ENCODE measurements at regions of chr16 and their contacts with region 1.

Region 1: GRCh38 chr16:8868416-8869211 is at the start of gene CARHSP1:
- DNase-seq: peak; percentile 96
- H3K4me3 ChIP-seq: peak within 1 kb of the TSS; percentile 56 to 94 (median 84)
- H3K27ac ChIP-seq: peak within 1 kb of the TSS; percentile 77 to 94 (median 91)
- H3K4me1 ChIP-seq: peaks cover 30 to 76% (median 71%) of the 10 kb centered on the region in 6 donors
- H3K27me3 ChIP-seq: no peaks in the 10 kb centered on the region
- CTCF ChIP-seq: peak in 1 of 11 experiments; percentile 30
- POLR2A ChIP-seq: peak in 1 of 3 donors; percentile 42
- total RNA-seq, gene CARHSP1: 45.5 to 75.2 (median 53.2) TPM

Region 2: GRCh38 chr16:8797364-8798173 is 71.0 kb before region 1 on chr16 and contains the starts of genes PMM2 and TMEM186:
- intact Hi-C with region 1: loop called (anchors 5 kb)
- DNase-seq: peak; percentile 100
- H3K4me3 ChIP-seq: peak within 1 kb of the TSS; percentile 75 to 100 (median 95)
- H3K27ac ChIP-seq: peak within 1 kb of the TSS; percentile 56 to 87 (median 84)
- H3K4me1 ChIP-seq: peaks cover 21 to 64% (median 41%) of the 10 kb centered on the region in 6 donors
- H3K27me3 ChIP-seq: no peaks in the 10 kb centered on the region
- CTCF ChIP-seq: peak in 4 of 11 experiments; percentile 34 to 43 (median 38)
- POLR2A ChIP-seq: peak in 1 of 3 donors; percentile 8
- total RNA-seq, gene PMM2: 26.5 to 38.8 (median 33.6) TPM
- total RNA-seq, gene TMEM186: 5.8 to 12.1 (median 8.1) TPM

Measured in spleen (tissue), 13 donors.